ENCODE measurements at regions of chr17 and their contacts with region 1.

Region 1: GRCh38 chr17:77881545-77881944 is 77.0 kb upstream of the TNRC6C start:
- DNase-seq: peak; percentile 35 to 78 (median 45)
- ATAC-seq: peak; percentile 70
- H3K4me3 ChIP-seq: peak overlapping the region; percentile 61
- H3K4me3 Mint-ChIP-seq: peak overlapping the region; percentile 71 to 94 (median 81)
- H3K27ac ChIP-seq: peak overlapping the region; percentile 93
- H3K27ac Mint-ChIP-seq: peak overlapping the region; percentile 92 to 99 (median 98)
- H3K4me1 ChIP-seq: peaks cover 62 to 79% of the 10 kb centered on the region in 2 donors
- H3K4me1 Mint-ChIP-seq: peaks cover 58 to 98% (median 89%) of the 10 kb centered on the region in 7 donors
- H3K27me3 ChIP-seq: no peaks in the 10 kb centered on the region
- H3K27me3 Mint-ChIP-seq: peaks cover 0 to 17% (median 0%) of the 10 kb centered on the region in 5 donors

Region 2: GRCh38 chr17:77528516-77529327 is 352.8 kb before region 1 on chr17:
- CTCF ChIA-PET with region 1: no interaction called
- POLR2A ChIA-PET with region 1: no interaction called
- intact Hi-C with region 1: no loop called
- DNase-seq: peak in 5 of 9 donors; percentile 15 to 32 (median 25)
- ATAC-seq: peak; percentile 46
- H3K4me3 ChIP-seq: peak overlapping the region; percentile 6
- H3K4me3 Mint-ChIP-seq: peak overlapping the region in 7 of 10 donors; percentile 39 to 70 (median 61)
- H3K27ac ChIP-seq: no peak overlapping the region
- H3K27ac Mint-ChIP-seq: no peak overlapping the region
- H3K4me1 ChIP-seq: no peaks in the 10 kb centered on the region
- H3K4me1 Mint-ChIP-seq: peaks cover 0 to 20% (median 10%) of the 10 kb centered on the region in 7 donors
- H3K27me3 ChIP-seq: no peaks in the 10 kb centered on the region
- H3K27me3 Mint-ChIP-seq: peaks cover 4 to 34% (median 8%) of the 10 kb centered on the region in 5 donors

Region 3: GRCh38 chr17:77772461-77772897 is 109.1 kb before region 1 on chr17:
- CTCF ChIA-PET with region 1: no interaction called
- POLR2A ChIA-PET with region 1: no interaction called
- intact Hi-C with region 1: loop called (anchors 2 to 5 kb)
- DNase-seq: peak; percentile 41 to 69 (median 57)
- ATAC-seq: peak; percentile 93
- H3K4me3 ChIP-seq: no peak overlapping the region
- H3K4me3 Mint-ChIP-seq: peak overlapping the region in 1 of 10 donors; percentile 8
- H3K27ac ChIP-seq: no peak overlapping the region
- H3K27ac Mint-ChIP-seq: peak overlapping the region in 5 of 9 donors; percentile 12 to 78 (median 74)
- H3K4me1 ChIP-seq: peaks cover 7 to 9% of the 10 kb centered on the region in 2 donors
- H3K4me1 Mint-ChIP-seq: peaks cover 12 to 15% (median 13%) of the 10 kb centered on the region in 7 donors
- H3K27me3 ChIP-seq: no peaks in the 10 kb centered on the region
- H3K27me3 Mint-ChIP-seq: peaks cover 0 to 17% (median 0%) of the 10 kb centered on the region in 5 donors

Region 4: GRCh38 chr17:77810536-77810935 is 71.0 kb before region 1 on chr17:
- CTCF ChIA-PET with region 1: no interaction called
- POLR2A ChIA-PET with region 1: no interaction called
- intact Hi-C with region 1: no loop called
- DNase-seq: no peak
- ATAC-seq: no peak
- H3K4me3 ChIP-seq: no peak overlapping the region
- H3K4me3 Mint-ChIP-seq: no peak overlapping the region
- H3K27ac ChIP-seq: no peak overlapping the region
- H3K27ac Mint-ChIP-seq: no peak overlapping the region
- H3K4me1 ChIP-seq: no peaks in the 10 kb centered on the region
- H3K4me1 Mint-ChIP-seq: peaks cover 0 to 3% (median 0%) of the 10 kb centered on the region in 7 donors
- H3K27me3 ChIP-seq: no peaks in the 10 kb centered on the region
- H3K27me3 Mint-ChIP-seq: peaks cover 0 to 5% (median 0%) of the 10 kb centered on the region in 5 donors

Region 5: DNA sequence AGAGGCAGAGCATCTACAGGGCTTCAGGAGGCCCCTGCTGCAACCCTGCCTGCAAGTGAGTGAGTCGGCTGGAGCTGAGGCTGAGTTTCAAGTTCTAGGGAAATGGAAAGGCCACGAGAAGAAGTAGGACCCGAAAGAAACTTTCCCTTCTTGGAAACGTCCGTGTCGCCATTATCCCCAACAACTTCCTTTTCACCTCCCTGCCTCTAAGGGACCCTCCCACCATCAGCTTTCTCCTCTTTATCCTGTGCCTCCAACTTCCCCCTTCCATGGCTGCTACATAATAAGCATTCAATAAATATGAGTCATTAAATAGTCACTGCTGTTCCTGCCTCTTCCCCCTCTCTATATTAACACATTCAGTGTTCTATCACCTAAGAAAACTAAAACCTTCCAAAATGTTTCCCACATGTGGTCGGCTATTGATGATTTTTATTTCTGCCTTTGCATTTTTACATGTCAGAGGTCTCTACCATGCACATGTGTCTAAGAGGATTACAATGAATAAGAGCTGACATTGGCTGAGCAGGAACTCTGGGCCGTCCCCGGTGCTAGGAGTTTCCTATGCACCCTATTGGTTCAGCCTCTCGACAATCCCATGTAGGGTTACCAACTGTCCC is 38.9 kb before region 1 on chr17:
- CTCF ChIA-PET with region 1: no interaction called
- POLR2A ChIA-PET with region 1: interaction called, 13 read pairs
- intact Hi-C with region 1: loop called (anchors 1 kb)
- DNase-seq: no peak
- ATAC-seq: peak; percentile 52
- H3K4me3 ChIP-seq: no peak overlapping the region
- H3K4me3 Mint-ChIP-seq: peak overlapping the region in 6 of 10 donors; percentile 0 to 63 (median 44)
- H3K27ac ChIP-seq: no peak overlapping the region
- H3K27ac Mint-ChIP-seq: peak overlapping the region in 6 of 9 donors; percentile 0 to 90 (median 10)
- H3K4me1 ChIP-seq: peaks cover 38 to 44% of the 10 kb centered on the region in 2 donors
- H3K4me1 Mint-ChIP-seq: peaks cover 28 to 61% (median 51%) of the 10 kb centered on the region in 7 donors
- H3K27me3 ChIP-seq: no peaks in the 10 kb centered on the region
- H3K27me3 Mint-ChIP-seq: peaks cover 0 to 2% (median 0%) of the 10 kb centered on the region in 5 donors

Region 6: GRCh38 chr17:77869665-77870132 is 11.8 kb before region 1 on chr17:
- CTCF ChIA-PET with region 1: interaction called, 4 read pairs
- POLR2A ChIA-PET with region 1: interaction called, 11 read pairs
- intact Hi-C with region 1: loop called in 1 of 2 experiments (anchors 1 kb)
- DNase-seq: no peak
- ATAC-seq: peak; percentile 91
- H3K4me3 ChIP-seq: no peak overlapping the region
- H3K4me3 Mint-ChIP-seq: peak overlapping the region in 9 of 10 donors; percentile 25 to 68 (median 53)
- H3K27ac ChIP-seq: no peak overlapping the region
- H3K27ac Mint-ChIP-seq: peak overlapping the region in 5 of 9 donors; percentile 3 to 73 (median 47)
- H3K4me1 ChIP-seq: peaks cover 29 to 48% of the 10 kb centered on the region in 2 donors
- H3K4me1 Mint-ChIP-seq: peaks cover 37 to 66% (median 55%) of the 10 kb centered on the region in 7 donors
- H3K27me3 ChIP-seq: no peaks in the 10 kb centered on the region
- H3K27me3 Mint-ChIP-seq: peaks cover 0 to 29% (median 0%) of the 10 kb centered on the region in 5 donors

Region 7: DNA sequence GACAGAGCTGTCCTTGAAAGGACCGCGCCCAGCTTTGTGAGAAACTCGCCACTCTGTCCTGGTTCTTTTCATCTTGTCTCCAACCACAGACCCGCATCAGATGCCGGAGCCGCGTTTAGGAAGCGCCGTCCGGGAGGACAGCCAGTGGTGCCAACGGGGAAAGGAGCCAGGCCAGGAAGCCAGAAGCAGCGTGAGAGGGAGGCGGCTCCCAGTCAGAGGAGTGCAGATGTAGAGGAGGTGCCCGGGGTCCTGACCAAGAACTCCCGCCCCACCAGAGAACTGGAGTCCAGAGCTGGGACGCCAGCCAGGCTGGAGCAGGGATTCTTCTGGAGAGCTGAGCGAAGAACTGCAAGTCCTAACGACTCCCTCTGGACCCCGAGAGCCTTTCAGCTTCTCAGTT is 27.7 kb after region 1 on chr17:
- CTCF ChIA-PET with region 1: no interaction called
- POLR2A ChIA-PET with region 1: no interaction called
- intact Hi-C with region 1: no loop called
- DNase-seq: no peak
- ATAC-seq: no peak
- H3K4me3 ChIP-seq: no peak overlapping the region
- H3K4me3 Mint-ChIP-seq: no peak overlapping the region
- H3K27ac ChIP-seq: no peak overlapping the region
- H3K27ac Mint-ChIP-seq: no peak overlapping the region
- H3K4me1 ChIP-seq: no peaks in the 10 kb centered on the region
- H3K4me1 Mint-ChIP-seq: peaks cover 0 to 3% (median 0%) of the 10 kb centered on the region in 7 donors
- H3K27me3 ChIP-seq: no peaks in the 10 kb centered on the region
- H3K27me3 Mint-ChIP-seq: peaks cover 0 to 41% (median 3%) of the 10 kb centered on the region in 5 donors

Region 8: DNA sequence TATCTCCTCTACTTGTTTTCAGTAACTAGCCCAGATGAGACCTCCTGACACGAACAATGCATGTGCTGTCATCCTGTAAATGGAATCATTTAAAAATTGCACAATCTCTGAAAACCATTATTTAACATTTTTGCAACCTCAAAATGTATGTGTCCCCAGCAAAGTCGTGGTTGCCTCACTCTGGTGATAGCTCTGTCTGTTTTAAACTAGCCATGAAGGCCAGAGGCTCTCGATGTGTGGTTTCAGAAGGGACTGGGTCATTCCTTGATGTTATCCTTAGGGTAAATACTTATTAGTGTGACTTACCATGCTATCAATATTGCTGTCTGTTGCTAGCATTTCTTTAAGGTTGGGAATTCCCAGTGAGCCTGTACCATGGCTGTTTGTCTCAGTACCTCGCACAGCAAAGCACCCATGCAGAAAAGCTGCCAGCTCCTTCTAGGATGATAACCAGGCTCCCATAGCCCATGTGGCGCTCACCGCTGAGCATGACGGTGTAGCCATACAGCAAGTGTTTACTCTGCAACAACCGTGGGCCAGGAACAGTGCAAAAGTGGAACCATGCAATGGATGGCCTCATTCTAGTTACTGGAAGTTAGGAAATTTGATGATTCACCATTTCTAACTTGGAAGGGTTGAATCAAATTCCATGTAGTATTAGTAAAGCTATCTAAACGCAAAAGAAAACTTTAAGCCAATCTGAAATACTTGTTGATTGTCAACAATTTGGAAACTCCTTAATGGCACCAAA is 494.0 kb after region 1 on chr17:
- CTCF ChIA-PET with region 1: no interaction called
- POLR2A ChIA-PET with region 1: no interaction called
- intact Hi-C with region 1: no loop called
- DNase-seq: no peak
- ATAC-seq: peak; percentile 43
- H3K4me3 ChIP-seq: no peak overlapping the region
- H3K4me3 Mint-ChIP-seq: peak overlapping the region in 1 of 10 donors; percentile 45
- H3K27ac ChIP-seq: no peak overlapping the region
- H3K27ac Mint-ChIP-seq: peak overlapping the region in 1 of 9 donors; percentile 16
- H3K4me1 ChIP-seq: peaks cover 16% of the 10 kb centered on the region in 2 donors
- H3K4me1 Mint-ChIP-seq: peaks cover 12 to 26% (median 14%) of the 10 kb centered on the region in 7 donors
- H3K27me3 ChIP-seq: no peaks in the 10 kb centered on the region
- H3K27me3 Mint-ChIP-seq: no peaks in the 10 kb centered on the region

Measured in naive thymus-derived CD4-positive, alpha-beta T cell (primary cell).